ENCODE measurements at regions of chr5 and their contacts with region 1.

Region 1: DNA sequence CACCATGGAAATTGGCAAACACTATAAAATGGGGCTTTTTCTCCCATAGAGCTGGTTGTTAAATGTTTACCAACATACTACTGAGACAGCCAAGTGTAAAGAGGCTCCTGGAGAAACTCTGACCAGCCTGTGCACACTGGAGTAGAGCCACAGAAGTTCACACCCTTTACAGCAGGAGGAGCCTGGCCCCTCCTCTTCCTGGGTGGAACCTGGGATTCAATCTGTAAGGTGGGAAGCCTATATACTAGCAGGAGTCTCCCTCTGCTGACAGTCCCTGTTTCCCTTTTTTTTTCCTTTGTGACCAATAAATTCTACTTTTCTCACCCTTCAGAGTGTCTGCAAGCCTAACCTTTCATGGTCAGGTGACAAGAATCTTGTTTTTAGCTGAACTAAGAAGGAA is 10.4 kb upstream of the SLC30A5 start:
- DNase-seq: no peak
- ATAC-seq: no peak
- H3K4me3 Mint-ChIP-seq: no peak overlapping the region
- H3K27ac Mint-ChIP-seq: no peak overlapping the region
- H3K4me1 Mint-ChIP-seq: peaks cover 16% of the 10 kb centered on the region
- H3K27me3 Mint-ChIP-seq: no peaks in the 10 kb centered on the region

Region 2: DNA sequence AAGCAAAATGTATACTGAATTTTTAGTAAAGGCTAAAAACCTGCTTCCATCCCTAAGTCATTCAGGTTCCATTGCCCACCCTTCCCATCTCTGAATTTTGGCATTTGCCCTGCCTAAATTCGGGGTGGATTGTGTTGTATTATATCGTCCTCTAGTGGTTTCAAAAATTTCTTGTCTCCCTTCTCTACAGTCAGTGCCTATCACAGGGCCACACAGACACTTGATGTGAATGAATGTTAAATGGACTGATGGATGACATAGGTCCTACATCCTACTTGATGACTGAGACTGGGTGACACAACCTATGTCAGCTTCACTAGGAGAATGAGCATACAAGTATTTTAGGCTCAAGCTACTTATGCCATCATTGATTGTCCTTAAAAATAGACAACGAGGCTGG is 35.2 kb before region 1 on chr5:
- CTCF ChIA-PET with region 1: interaction called, 3 read pairs
- POLR2A ChIA-PET with region 1: no interaction called
- intact Hi-C with region 1: loop called in 1 of 2 experiments (anchors 2 kb)
- DNase-seq: no peak
- ATAC-seq: peak; percentile 80
- H3K4me3 Mint-ChIP-seq: no peak overlapping the region
- H3K27ac Mint-ChIP-seq: no peak overlapping the region
- H3K4me1 Mint-ChIP-seq: peaks cover 9% of the 10 kb centered on the region
- H3K27me3 Mint-ChIP-seq: no peaks in the 10 kb centered on the region

Region 3: GRCh38 chr5:69250598-69250997 is 167.2 kb after region 1 on chr5:
- CTCF ChIA-PET with region 1: no interaction called
- POLR2A ChIA-PET with region 1: no interaction called
- intact Hi-C with region 1: no loop called
- DNase-seq: no peak
- ATAC-seq: no peak
- H3K4me3 Mint-ChIP-seq: no peak overlapping the region
- H3K27ac Mint-ChIP-seq: no peak overlapping the region
- H3K4me1 Mint-ChIP-seq: peaks cover 11% of the 10 kb centered on the region
- H3K27me3 Mint-ChIP-seq: no peaks in the 10 kb centered on the region

Measured in activated CD4-positive, alpha-beta T cell treated with anti-CD3 and anti-CD28 coated beads for 36 hours (primary cell).